ENCODE measurements at regions of chr7 and their contacts with region 1.

Region 1: GRCh38 chr7:35906191-35906908 is 105.5 kb downstream of the SEPTIN7 start:
- DNase-seq: peak; percentile 57
- H3K4me3 ChIP-seq: no peak overlapping the region
- H3K27ac ChIP-seq: no peak overlapping the region
- H3K4me1 ChIP-seq: no peaks in the 10 kb centered on the region
- H3K27me3 ChIP-seq: no peaks in the 10 kb centered on the region
- CTCF ChIP-seq: peak; percentile 91 to 96 (median 92)
- EP300 ChIP-seq: no peak
- POLR2A ChIP-seq: no peak

Region 2: DNA sequence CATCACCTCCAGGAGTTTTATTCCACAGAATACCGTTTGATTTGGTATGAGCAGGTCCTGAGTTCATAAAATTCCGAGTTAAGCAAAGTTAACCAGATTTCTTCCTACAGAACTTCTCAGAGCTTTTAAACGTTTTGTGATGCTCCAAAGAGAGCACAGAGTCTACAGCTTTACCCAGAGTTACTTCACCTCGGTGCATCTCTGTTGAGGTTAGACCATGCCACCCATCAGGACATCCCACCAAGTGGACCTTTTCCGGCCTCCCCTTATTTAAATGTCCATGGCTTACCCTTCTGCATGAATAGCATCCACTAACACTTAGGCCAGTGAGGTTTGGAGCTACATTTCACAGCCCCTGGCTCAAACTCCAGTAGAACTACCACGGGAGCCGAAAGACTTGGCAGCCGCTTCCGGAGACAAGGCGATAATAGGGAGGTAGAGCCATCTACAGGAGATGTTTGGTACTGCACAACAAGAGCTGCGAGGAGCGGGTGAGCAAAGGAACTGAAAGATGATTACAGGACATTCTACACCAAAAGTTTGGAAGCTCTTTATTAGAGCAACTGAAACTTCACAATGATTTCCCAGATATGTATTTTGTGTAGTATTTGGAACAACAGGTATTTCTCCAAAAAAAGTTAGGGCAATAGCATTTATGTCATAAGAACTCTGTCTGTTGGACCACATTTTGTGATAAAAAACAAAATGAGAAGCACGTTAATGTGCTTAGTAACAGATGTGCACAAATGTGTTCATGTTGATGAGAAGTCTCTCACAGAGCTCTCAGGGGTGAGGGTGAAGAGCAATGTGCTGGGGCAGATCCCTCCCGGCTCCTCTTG is 386.2 kb before region 1 on chr7:
- in situ Hi-C with region 1: no loop called
- intact Hi-C with region 1: no loop called
- DNase-seq: peak; percentile 59
- H3K4me3 ChIP-seq: no peak overlapping the region
- H3K27ac ChIP-seq: no peak overlapping the region
- H3K4me1 ChIP-seq: no peaks in the 10 kb centered on the region
- H3K27me3 ChIP-seq: peaks cover 26% of the 10 kb centered on the region
- CTCF ChIP-seq: peak; percentile 65 to 84 (median 77)
- EP300 ChIP-seq: no peak
- POLR2A ChIP-seq: no peak

Region 3: DNA sequence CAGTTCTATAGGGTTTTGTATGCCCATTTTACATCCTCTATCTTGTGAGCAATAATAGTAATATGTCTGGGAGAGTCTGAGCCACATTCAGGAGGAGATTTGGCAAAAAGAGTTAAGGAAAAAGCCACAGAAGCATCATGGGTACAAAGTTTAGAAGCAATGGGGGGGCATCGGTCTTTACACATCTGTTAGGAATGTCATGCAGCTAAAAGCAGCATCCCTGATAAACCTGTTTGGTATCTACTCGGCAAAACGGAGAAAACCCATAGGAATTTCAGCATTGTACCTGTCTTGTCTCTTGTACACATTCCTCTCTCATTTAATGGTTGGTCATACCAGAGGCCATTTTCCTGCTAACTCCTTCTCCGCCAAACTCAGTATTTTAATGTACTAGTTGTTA is 198.9 kb before region 1 on chr7:
- in situ Hi-C with region 1: loop called in 3 of 4 experiments (anchors 5 kb)
- intact Hi-C with region 1: loop called (anchors 2 kb)
- DNase-seq: no peak
- H3K4me3 ChIP-seq: no peak overlapping the region
- H3K27ac ChIP-seq: no peak overlapping the region
- H3K4me1 ChIP-seq: peaks cover 0 to 8% (median 3%) of the 10 kb centered on the region in 4 donors
- H3K27me3 ChIP-seq: no peaks in the 10 kb centered on the region
- CTCF ChIP-seq: no peak
- EP300 ChIP-seq: no peak
- POLR2A ChIP-seq: no peak

Region 4: DNA sequence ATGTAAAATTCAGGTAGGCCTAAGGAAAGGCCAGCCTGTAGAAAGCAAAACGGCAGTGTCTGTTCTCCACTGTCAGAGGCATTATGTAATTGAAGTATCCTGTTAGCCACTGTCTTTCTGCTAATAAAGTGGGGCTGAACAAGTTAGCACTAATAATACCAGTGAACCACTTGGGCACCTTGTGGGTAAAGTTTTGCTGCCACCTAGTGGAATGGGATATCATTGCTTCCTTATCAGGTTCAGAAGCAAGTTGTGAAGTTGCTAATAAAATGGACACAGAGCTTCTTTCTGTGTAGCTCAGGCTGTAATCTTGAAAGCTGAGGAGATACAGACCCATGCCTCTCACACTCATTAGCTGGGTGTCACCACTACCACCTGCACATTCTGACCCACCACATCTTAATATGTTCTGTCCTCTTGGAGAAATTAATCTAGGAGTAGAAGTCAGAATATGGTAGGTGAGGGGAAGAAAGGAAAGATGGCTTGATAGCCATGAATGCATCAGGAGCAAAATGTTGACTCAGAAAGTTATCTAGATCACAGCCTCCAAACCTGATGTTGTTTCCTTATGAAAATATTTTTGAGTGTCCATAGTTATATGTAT is 69.6 kb after region 1 on chr7:
- in situ Hi-C with region 1: no loop called
- intact Hi-C with region 1: loop called (anchors 10 kb)
- DNase-seq: peak; percentile 31
- H3K4me3 ChIP-seq: no peak overlapping the region
- H3K27ac ChIP-seq: no peak overlapping the region
- H3K4me1 ChIP-seq: peaks cover 0 to 2% (median 0%) of the 10 kb centered on the region in 4 donors
- H3K27me3 ChIP-seq: peaks cover 19% of the 10 kb centered on the region
- CTCF ChIP-seq: peak; percentile 73 to 86 (median 79)
- EP300 ChIP-seq: no peak
- POLR2A ChIP-seq: no peak

Region 5: GRCh38 chr7:36021367-36021766 is 115.0 kb after region 1 on chr7:
- in situ Hi-C with region 1: no loop called
- intact Hi-C with region 1: no loop called
- DNase-seq: no peak
- H3K4me3 ChIP-seq: no peak overlapping the region
- H3K27ac ChIP-seq: no peak overlapping the region
- H3K4me1 ChIP-seq: no peaks in the 10 kb centered on the region
- H3K27me3 ChIP-seq: no peaks in the 10 kb centered on the region
- CTCF ChIP-seq: no peak
- EP300 ChIP-seq: no peak
- POLR2A ChIP-seq: no peak